ENCODE measurements at regions of chr3 and their contacts with region 1.

Region 1: GRCh38 chr3:160968761-160969160 is 136.4 kb downstream of the B3GALNT1 start:
- DNase-seq: no peak
- H3K4me3 ChIP-seq: no peak overlapping the region
- H3K27ac ChIP-seq: no peak overlapping the region; the same call in 1 of the 2 replicates
- H3K4me1 ChIP-seq: peaks cover 0 to 5% (median 0%) of the 10 kb centered on the region in 4 experiments; a peak in 2 of 7 replicates
- H3K27me3 ChIP-seq: no peaks in the 10 kb centered on the region
- CTCF ChIP-seq: no peak
- EP300 ChIP-seq: no peak
- POLR2A ChIP-seq: no peak
- RAD21 ChIP-seq: no peak

Region 2: GRCh38 chr3:160956806-160957205 is 12.0 kb before region 1 on chr3:
- CTCF ChIA-PET with region 1: interaction called, 15 read pairs
- POLR2A ChIA-PET with region 1: no interaction called
- DNase-seq: no peak
- H3K4me3 ChIP-seq: no peak overlapping the region
- H3K27ac ChIP-seq: no peak overlapping the region
- H3K4me1 ChIP-seq: no peaks in the 10 kb centered on the region
- H3K27me3 ChIP-seq: no peaks in the 10 kb centered on the region
- CTCF ChIP-seq: peak in 1 of 3 experiments; percentile 32; a peak in 1 of 4 replicates
- EP300 ChIP-seq: no peak
- POLR2A ChIP-seq: no peak
- RAD21 ChIP-seq: peak; percentile 58 to 60

Region 3: GRCh38 chr3:161142486-161142885 is 173.7 kb after region 1 on chr3:
- CTCF ChIA-PET with region 1: no interaction called
- POLR2A ChIA-PET with region 1: no interaction called
- DNase-seq: no peak
- H3K4me3 ChIP-seq: no peak overlapping the region
- H3K27ac ChIP-seq: no peak overlapping the region
- H3K4me1 ChIP-seq: no peaks in the 10 kb centered on the region
- H3K27me3 ChIP-seq: no peaks in the 10 kb centered on the region
- CTCF ChIP-seq: no peak
- EP300 ChIP-seq: no peak
- POLR2A ChIP-seq: no peak
- RAD21 ChIP-seq: no peak